Heart right ventricle (tissue), 16 donors: ENCODE measurements at regions of chr7 and their contacts with region 1.

Region 1: GRCh38 chr7:56051339-56052191 is at the starts of genes CCT6A and PSPH:
- DNase-seq: peak; percentile 98
- ATAC-seq: peak; percentile 99 to 100 (median 99)
- H3K4me3 ChIP-seq: peak within 1 kb of the TSS; percentile 63 to 98 (median 82)
- H3K27ac ChIP-seq: peak within 1 kb of the TSS; percentile 77 to 95 (median 91)
- H3K4me1 ChIP-seq: peaks cover 6 to 57% (median 28%) of the 10 kb centered on the region in 9 donors
- H3K27me3 ChIP-seq: no peaks in the 10 kb centered on the region
- CTCF ChIP-seq: no peak
- total RNA-seq, gene CCT6A: 53.5 to 74.8 (median 66.2) TPM
- total RNA-seq, gene PSPH: 7.5 to 14.7 (median 9.8) TPM

Region 2: DNA sequence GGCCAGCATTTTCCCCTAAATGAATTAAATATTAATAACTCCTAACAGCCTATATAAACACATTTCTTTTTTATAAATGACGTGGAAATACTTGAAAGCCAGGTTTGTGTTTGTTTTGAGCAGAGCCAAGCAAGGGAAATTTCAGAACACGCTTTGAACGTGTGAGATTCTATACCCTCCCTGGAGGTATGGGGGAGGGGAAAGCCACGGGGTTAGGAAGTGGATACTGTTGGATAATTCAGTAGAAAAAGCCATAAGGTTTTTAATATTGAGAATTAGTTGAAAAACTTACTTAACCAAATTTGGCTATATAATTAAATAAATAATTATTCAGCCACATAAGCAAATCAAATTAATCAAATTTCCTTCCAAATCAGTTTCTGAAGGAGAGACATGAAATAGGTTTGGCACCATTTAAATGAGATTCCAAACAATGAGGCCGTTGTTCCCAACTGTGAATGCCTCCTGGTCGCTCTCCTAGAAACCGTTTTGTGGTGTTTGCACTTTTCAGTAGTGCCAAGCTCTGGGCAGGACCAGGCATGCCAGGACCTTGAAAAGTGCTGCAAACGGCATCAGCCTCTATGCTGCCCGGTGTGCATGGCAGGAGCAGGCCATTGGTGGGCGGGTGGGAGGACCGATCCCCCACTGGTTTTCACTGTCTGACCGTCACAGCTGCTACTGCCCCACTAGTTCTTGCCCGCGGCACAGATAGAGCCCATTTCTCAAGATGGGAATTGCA is 277.1 kb before region 1 on chr7:
- intact Hi-C with region 1: no loop called
- DNase-seq: no peak
- ATAC-seq: no peak
- H3K4me3 ChIP-seq: no peak overlapping the region
- H3K27ac ChIP-seq: no peak overlapping the region
- H3K4me1 ChIP-seq: no peaks in the 10 kb centered on the region
- H3K27me3 ChIP-seq: no peaks in the 10 kb centered on the region
- CTCF ChIP-seq: no peak

Region 3: DNA sequence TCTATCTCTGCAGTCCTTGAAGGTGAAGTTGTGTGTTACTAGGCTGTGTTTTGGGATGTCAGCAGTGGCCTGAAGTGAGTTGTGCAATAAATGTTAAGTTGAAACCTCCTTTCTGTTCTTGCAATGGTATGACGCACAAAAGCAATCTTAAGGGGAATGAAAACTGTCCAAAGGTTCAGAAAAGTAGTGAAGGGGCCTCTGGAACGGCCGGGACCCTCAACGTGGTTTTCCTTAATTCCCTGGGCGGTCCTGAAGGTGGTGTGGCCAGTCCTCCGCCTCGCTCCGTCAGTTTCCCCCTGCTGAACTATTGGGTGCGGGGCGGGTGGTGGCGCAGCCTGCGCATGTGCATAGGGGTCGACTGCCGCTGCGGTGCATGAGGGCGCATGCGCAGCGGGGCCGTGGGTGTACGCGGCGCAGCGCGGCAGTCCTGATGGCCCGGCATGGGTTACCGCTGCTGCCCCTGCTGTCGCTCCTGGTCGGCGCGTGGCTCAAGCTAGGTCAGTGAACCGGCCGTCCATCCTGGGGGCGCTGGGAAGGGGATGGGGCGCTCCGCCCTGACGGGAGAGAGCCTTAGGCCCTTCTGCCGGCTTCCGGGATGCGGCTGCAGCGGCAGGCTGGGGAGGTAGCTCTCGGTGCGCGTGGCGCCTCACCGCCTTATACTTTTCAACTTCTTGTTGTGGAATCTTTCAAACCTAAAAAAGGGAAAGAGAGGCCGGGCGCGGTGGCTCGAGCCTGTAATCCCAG is 12.5 kb after region 1 on chr7 and contains the start of gene SUMF2:
- intact Hi-C with region 1: loop called in 1 of 10 experiments (anchors 1 kb)
- DNase-seq: peak; percentile 93 to 94
- ATAC-seq: peak; percentile 99 to 100 (median 99)
- H3K4me3 ChIP-seq: peak within 1 kb of the TSS; percentile 53 to 95 (median 86)
- H3K27ac ChIP-seq: peak within 1 kb of the TSS; percentile 39 to 95 (median 89)
- H3K4me1 ChIP-seq: peaks cover 0 to 32% (median 11%) of the 10 kb centered on the region in 9 donors
- H3K27me3 ChIP-seq: no peaks in the 10 kb centered on the region
- CTCF ChIP-seq: peak in 6 of 9 donors; percentile 13 to 53 (median 38)
- total RNA-seq, gene SUMF2: 20.8 to 49.2 (median 32.6) TPM

Region 4: GRCh38 chr7:56106108-56107073 is 54.8 kb after region 1 on chr7 and contains the start of gene CHCHD2:
- intact Hi-C with region 1: loop called in 1 of 10 experiments (anchors 5 kb)
- DNase-seq: peak; percentile 94 to 97
- ATAC-seq: peak; percentile 100
- H3K4me3 ChIP-seq: peak within 1 kb of the TSS; percentile 48 to 95 (median 77)
- H3K27ac ChIP-seq: peak within 1 kb of the TSS; percentile 40 to 95 (median 90)
- H3K4me1 ChIP-seq: peaks cover 9 to 28% (median 14%) of the 10 kb centered on the region in 9 donors
- H3K27me3 ChIP-seq: peaks cover 0 to 4% (median 0%) of the 10 kb centered on the region in 7 donors
- CTCF ChIP-seq: no peak
- total RNA-seq, gene CHCHD2: 379 to 537 (median 426) TPM